ENCODE measurements at regions of chr9 and their contacts with region 1.

Region 1: DNA sequence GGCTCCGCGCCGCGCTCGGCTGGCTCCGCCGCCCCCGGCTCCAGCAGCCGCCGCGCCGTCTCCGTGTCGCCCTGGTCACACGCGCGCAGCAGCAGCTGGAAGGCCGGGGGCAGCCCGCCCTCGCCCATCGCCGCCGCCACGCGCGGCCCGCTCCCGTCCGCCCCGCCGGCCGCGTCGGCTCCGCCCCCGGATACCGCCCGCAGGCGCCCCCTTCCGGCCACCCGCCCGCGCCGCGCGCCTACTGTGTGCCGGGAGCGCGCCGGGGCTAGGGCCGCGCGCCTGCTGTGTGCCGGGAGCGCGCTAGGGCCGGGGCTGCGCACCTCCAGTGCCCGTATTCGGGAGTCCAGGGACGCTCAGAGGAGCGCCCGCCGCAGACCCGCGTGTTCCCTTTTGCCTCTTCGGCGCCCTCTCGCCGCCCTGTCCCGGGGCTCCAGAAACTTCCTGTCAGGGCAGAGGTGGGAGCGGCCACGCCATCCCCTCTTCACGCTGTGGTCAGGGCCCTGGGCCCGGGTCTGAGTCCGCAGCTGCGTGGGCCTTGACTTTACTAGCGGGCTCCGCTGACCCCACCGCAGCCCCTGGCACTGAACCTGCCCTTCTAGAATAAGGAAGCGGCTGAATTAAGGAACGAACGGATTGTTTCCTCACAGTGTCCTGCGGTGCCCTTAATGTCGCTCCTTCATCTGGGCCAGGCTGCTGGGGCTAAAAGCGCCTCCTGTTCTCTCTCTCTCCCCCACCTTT is at the start of gene ANKS6:
- DNase-seq: peak; percentile 81
- H3K4me3 Mint-ChIP-seq: peak within 1 kb of the TSS; percentile 77
- H3K27ac Mint-ChIP-seq: peak within 1 kb of the TSS; percentile 56
- H3K4me1 Mint-ChIP-seq: peaks cover 30% of the 10 kb centered on the region
- H3K27me3 Mint-ChIP-seq: no peaks in the 10 kb centered on the region
- total RNA-seq, gene ANKS6: 14.6 to 15.0 TPM

Region 2: DNA sequence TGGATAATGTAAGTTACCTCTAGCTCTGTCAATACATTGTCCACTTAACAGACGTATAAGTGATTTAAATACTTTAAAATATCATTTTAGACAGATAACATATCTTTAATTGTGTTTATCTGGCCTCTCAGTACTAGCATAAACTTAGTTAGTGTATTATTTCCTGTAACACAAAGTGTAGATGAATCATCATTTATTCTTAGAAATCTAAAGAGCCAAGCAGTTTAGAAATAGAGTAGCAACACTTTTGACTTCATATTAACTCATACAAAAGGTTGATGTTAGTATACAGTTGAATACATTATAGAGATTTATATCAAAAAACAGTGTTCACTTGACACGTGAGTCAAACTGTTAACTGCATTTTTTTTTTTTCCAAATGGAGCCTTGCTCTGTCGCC is 1144.9 kb before region 1 on chr9:
- CTCF ChIA-PET with region 1: no interaction called
- intact Hi-C with region 1: loop called (anchors 10 kb)
- DNase-seq: no peak
- H3K4me3 Mint-ChIP-seq: no peak overlapping the region
- H3K27ac Mint-ChIP-seq: no peak overlapping the region
- H3K4me1 Mint-ChIP-seq: no peaks in the 10 kb centered on the region
- H3K27me3 Mint-ChIP-seq: no peaks in the 10 kb centered on the region

Region 3: DNA sequence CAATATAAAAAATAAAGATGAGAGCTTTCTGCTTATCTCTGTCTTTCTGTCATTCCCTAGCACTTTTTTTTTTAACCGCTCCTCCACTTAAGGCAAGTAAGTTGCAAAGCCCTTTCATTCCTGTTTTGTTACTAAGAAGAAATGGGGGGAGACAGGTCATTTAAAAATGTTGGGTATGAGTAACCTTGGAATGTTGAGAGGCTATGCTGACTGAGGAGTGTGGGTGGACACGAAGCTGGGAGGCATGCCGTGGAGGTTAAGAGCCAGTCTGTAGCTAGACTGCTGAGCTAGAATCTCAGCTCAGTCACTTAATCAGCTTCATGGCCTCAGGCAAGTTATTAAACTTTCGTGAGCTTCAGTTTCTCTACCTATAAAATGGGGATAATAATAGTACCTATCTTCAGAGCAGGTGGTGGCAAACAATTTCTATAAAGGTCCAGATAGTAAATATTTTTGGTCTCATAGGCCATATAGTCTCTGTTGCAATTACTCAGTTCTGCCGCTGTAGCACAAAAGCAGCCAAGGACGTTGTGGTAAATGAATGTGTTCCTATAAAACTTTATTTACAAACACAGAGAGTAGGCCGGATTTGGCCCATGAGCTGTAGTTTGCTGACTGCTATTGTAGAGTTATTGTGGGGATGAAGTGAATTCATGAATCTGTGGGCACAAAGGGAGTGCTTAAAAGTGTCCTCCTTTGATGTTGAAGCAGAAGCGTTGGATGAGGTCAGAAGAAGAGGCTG is 307.8 kb before region 1 on chr9:
- CTCF ChIA-PET with region 1: no interaction called
- intact Hi-C with region 1: no loop called
- DNase-seq: no peak
- H3K4me3 Mint-ChIP-seq: no peak overlapping the region
- H3K27ac Mint-ChIP-seq: no peak overlapping the region
- H3K4me1 Mint-ChIP-seq: no peaks in the 10 kb centered on the region
- H3K27me3 Mint-ChIP-seq: peaks cover 10% of the 10 kb centered on the region

Region 4: DNA sequence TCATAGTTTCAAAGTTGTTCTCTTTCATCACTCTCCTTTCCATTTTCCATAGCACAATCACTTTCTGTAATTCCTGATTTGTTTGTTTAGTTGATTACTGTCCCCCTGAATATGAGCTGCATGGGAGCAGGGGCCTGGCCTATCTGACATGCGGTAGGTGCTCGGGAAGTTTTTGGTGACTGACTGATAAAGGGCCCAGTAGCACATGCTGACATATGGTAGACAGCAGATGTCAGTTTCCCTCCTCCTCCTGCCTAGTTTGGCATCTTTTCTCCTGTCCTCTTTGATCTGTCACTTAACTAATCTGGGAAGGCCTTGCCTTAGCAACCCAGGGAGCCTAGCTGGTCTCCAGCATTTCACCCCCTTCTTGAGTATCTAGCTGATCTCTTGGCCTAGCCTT is 25.3 kb after region 1 on chr9:
- CTCF ChIA-PET with region 1: no interaction called
- intact Hi-C with region 1: no loop called
- DNase-seq: no peak
- H3K4me3 Mint-ChIP-seq: no peak overlapping the region
- H3K27ac Mint-ChIP-seq: no peak overlapping the region
- H3K4me1 Mint-ChIP-seq: no peaks in the 10 kb centered on the region
- H3K27me3 Mint-ChIP-seq: no peaks in the 10 kb centered on the region

Region 5: GRCh38 chr9:98922721-98923435 is 126.3 kb after region 1 on chr9:
- CTCF ChIA-PET with region 1: no interaction called
- intact Hi-C with region 1: no loop called
- DNase-seq: no peak
- H3K4me3 Mint-ChIP-seq: no peak overlapping the region
- H3K27ac Mint-ChIP-seq: no peak overlapping the region
- H3K4me1 Mint-ChIP-seq: no peaks in the 10 kb centered on the region
- H3K27me3 Mint-ChIP-seq: no peaks in the 10 kb centered on the region

Region 6: GRCh38 chr9:98983295-98984268 is 187.0 kb after region 1 on chr9:
- CTCF ChIA-PET with region 1: no interaction called
- intact Hi-C with region 1: no loop called
- DNase-seq: no peak
- H3K4me3 Mint-ChIP-seq: no peak overlapping the region
- H3K27ac Mint-ChIP-seq: no peak overlapping the region
- H3K4me1 Mint-ChIP-seq: no peaks in the 10 kb centered on the region
- H3K27me3 Mint-ChIP-seq: no peaks in the 10 kb centered on the region

Region 7: GRCh38 chr9:99118782-99119466 is 322.4 kb after region 1 on chr9:
- CTCF ChIA-PET with region 1: no interaction called
- intact Hi-C with region 1: loop called (anchors 10 kb)
- DNase-seq: peak; percentile 80
- H3K4me3 Mint-ChIP-seq: peak overlapping the region; percentile 70
- H3K27ac Mint-ChIP-seq: peak overlapping the region; percentile 90
- H3K4me1 Mint-ChIP-seq: peaks cover 85% of the 10 kb centered on the region
- H3K27me3 Mint-ChIP-seq: no peaks in the 10 kb centered on the region

Measured in activated naive CD4-positive, alpha-beta T cell treated with anti-CD3 and anti-CD28 coated beads for 36 hours (primary cell).